Ascending aorta (tissue), 2 donors: ENCODE measurements at regions of chr2 and their contacts with region 1.

Region 1: GRCh38 chr2:10072656-10073480 is 7.3 kb downstream of the CYS1 start:
- DNase-seq: peak; percentile 30 to 92
- H3K4me3 ChIP-seq: no peak overlapping the region
- H3K27ac ChIP-seq: no peak overlapping the region
- H3K4me1 ChIP-seq: no peaks in the 10 kb centered on the region
- H3K27me3 ChIP-seq: no peaks in the 10 kb centered on the region
- CTCF ChIP-seq: peak; percentile 82 to 89 (median 84)

Region 2: GRCh38 chr2:9951272-9951972 is 121.4 kb before region 1 on chr2 and contains the start of gene GRHL1:
- intact Hi-C with region 1: no loop called
- DNase-seq: peak; percentile 45 to 94
- H3K4me3 ChIP-seq: peak within 1 kb of the TSS; percentile 85 to 96
- H3K27ac ChIP-seq: no peak within 1 kb of the TSS
- H3K4me1 ChIP-seq: peaks cover 4 to 10% of the 10 kb centered on the region in 2 donors
- H3K27me3 ChIP-seq: no peaks in the 10 kb centered on the region
- CTCF ChIP-seq: no peak
- total RNA-seq, gene GRHL1: 0.43 TPM

Region 3: GRCh38 chr2:10097352-10098148 is 24.7 kb after region 1 on chr2:
- intact Hi-C with region 1: loop called (anchors 1 kb)
- DNase-seq: peak in 1 of 2 donors; percentile 80
- H3K4me3 ChIP-seq: no peak overlapping the region
- H3K27ac ChIP-seq: no peak overlapping the region
- H3K4me1 ChIP-seq: peaks cover 0 to 5% of the 10 kb centered on the region in 2 donors
- H3K27me3 ChIP-seq: no peaks in the 10 kb centered on the region
- CTCF ChIP-seq: peak; percentile 79 to 98 (median 91)

Region 4: DNA sequence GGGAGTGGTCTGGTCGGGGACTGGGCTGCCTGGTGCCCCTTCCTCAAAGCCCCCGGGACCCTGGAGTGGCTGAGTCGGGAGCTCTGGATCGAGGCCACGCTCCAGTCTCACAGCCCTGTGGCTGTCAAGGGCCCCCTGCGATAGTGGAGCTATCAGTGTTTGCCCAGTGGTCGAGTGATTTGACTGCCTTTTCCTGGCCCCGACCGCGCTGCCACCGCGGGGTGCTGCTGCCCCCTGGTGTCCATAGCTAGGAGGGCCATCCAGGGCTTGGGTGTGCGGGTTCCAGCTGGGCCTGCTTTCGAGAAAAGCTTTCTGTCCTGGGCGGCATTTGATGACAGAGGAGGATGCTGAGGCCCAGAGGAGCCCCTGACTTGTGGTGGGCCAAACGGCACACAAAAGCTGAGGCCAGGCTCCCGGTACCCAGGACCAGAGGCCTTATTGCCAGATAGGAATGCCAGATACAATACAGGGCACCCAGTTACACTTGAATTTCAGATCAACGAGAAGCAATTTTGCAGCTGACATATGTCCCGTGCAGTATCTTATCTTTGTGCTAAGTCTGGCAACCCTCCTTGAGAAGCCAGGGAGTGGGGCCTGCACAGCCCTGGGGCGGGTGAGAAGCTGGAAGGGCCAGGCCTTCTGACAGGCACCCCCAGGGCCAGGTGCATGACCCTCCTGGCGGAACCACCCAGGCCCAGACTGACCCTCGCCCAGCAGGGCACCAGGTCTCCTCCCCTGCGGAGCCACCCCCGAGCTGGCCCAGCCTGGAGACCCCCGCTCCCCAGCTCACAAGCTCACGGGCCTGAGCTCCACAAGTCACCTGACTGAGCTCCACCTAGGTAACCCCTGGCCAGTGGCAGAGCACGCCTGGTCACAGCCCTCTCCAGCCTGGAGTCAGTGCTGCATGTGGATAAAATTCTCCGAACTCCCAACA is 362.3 kb after region 1 on chr2:
- intact Hi-C with region 1: loop called (anchors 1 kb)
- DNase-seq: peak in 1 of 2 donors; percentile 84
- H3K4me3 ChIP-seq: no peak overlapping the region
- H3K27ac ChIP-seq: no peak overlapping the region
- H3K4me1 ChIP-seq: peaks cover 0 to 2% of the 10 kb centered on the region in 2 donors
- H3K27me3 ChIP-seq: no peaks in the 10 kb centered on the region
- CTCF ChIP-seq: peak; percentile 94 to 99 (median 95)

Region 5: DNA sequence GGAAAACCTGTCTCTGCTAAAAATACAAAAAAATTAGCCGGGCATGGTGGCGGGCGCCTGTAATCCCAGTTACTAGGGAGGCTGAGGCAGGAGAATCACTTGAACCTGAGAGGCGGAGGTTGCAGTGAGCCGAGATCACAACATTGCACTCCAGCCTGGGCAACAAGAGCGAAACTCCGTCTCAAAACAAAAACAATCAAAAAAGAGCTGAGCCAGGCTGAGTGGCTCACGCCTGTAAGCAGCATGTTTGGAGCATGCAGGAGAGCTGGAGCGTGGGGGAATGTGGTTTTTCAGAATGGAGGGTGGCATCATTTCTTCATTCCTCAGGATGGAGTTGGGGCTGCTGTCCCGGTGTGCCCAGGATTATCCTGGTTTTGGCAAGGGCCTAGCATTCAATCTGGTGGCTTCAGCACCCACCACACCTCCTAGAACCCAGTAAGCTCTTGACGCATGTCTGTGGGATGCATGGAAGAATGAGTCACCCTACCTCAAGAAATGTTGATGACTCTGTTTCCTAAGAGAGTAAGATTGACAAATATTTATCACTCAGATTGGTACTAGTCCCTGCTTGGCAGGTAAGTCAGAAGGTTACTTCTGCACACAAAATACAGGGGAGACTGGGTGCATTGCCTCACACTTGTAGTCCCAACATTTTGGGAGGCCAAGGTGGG is 465.5 kb after region 1 on chr2:
- intact Hi-C with region 1: no loop called
- DNase-seq: no peak
- H3K4me3 ChIP-seq: no peak overlapping the region
- H3K27ac ChIP-seq: no peak overlapping the region
- H3K4me1 ChIP-seq: no peaks in the 10 kb centered on the region
- H3K27me3 ChIP-seq: no peaks in the 10 kb centered on the region
- CTCF ChIP-seq: no peak

Region 6: GRCh38 chr2:10584796-10585475 is 512.1 kb after region 1 on chr2:
- intact Hi-C with region 1: no loop called
- DNase-seq: no peak
- H3K4me3 ChIP-seq: no peak overlapping the region
- H3K27ac ChIP-seq: no peak overlapping the region
- H3K4me1 ChIP-seq: no peaks in the 10 kb centered on the region
- H3K27me3 ChIP-seq: no peaks in the 10 kb centered on the region
- CTCF ChIP-seq: no peak

Region 7: DNA sequence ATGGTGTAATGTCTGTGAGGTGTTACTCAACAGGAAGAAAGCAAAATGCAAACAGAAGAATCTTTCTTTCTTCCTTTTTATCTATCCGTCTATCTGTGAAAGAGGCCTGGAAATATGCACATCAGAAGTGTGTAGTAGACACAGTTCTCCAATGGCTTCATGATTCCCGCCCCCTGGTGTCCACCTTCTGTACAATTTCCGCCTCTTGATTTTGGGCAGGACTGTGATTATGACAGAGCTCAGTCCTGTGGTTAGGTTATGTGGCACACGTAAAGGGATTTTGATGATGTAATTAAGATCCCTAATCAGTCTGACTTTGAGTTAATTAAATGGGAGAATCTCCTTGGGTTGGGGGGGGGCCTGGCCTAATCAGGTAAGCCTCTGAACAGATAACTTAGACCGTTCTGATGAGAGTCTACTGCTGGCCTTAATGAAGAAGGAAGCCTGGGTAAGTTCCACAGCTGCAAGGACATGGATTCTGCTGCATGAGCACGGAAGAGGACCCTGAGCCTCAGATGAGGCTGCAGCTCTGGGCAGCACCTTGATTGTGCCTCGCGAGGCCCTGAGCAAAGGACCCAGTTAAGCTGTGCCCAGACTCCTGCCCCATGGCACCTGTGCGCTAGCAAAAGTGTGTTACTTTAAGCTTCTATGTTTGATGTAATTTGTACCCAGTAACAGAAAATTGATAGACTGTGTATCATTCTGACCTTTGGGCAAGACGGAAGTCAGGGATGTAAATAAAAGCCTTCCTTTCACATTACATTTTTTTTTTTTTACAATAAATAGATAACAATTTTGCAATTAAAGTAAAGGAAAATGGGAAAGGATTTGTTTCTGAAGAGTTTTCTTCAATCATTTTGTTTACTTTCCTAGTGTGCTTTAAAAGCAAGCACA is 827.6 kb after region 1 on chr2:
- intact Hi-C with region 1: no loop called
- DNase-seq: peak in 1 of 2 donors; percentile 56
- H3K4me3 ChIP-seq: no peak overlapping the region
- H3K27ac ChIP-seq: no peak overlapping the region
- H3K4me1 ChIP-seq: no peaks in the 10 kb centered on the region
- H3K27me3 ChIP-seq: no peaks in the 10 kb centered on the region
- CTCF ChIP-seq: no peak